Activated CD8-positive, alpha-beta T cell treated with anti-CD3 and anti-CD28 coated beads, Interleukin-2, amount 10 ng/mL, durations not matched to agents 7 days and 5 days (primary cell): ENCODE measurements at regions of chr17 and their contacts with region 1.

Region 1: GRCh38 chr17:68205251-68205807 is 42.5 kb upstream of the AMZ2 start:
- DNase-seq: peak; percentile 95
- ATAC-seq: peak; percentile 87
- H3K4me3 Mint-ChIP-seq: peak overlapping the region; percentile 85
- H3K27ac Mint-ChIP-seq: peak overlapping the region; percentile 89
- H3K4me1 Mint-ChIP-seq: peaks cover 42% of the 10 kb centered on the region
- H3K27me3 Mint-ChIP-seq: peaks cover 4% of the 10 kb centered on the region

Region 2: DNA sequence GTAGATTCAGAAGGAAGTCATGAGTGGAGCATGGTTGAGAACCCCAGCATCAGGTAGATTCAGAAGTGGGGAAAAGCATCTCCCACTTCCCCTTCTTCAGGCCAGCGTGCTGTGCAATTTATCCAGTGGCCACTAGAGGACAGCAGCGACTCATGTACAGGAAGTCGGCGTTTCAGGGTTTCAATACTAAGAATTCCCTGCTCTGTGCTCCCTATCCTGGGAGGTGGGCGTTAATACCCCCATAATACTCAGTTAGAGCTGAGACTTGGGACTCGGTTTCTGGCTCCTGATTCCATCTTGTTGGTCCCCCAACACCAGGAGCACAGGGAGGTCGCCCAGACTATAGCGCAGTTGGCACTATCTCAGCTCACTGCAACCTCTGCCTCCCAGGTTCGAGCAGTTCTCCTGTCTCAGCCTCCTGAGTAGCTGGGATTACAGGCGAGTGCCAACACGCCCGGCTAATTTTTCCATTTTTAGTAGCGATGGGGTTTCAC is 32.8 kb before region 1 on chr17:
- CTCF ChIA-PET with region 1: interaction called, 115 read pairs
- POLR2A ChIA-PET with region 1: interaction called, 9 read pairs
- DNase-seq: peak; percentile 83
- ATAC-seq: peak; percentile 52
- H3K4me3 Mint-ChIP-seq: no peak overlapping the region
- H3K27ac Mint-ChIP-seq: no peak overlapping the region
- H3K4me1 Mint-ChIP-seq: peaks cover 42% of the 10 kb centered on the region
- H3K27me3 Mint-ChIP-seq: no peaks in the 10 kb centered on the region

Region 3: GRCh38 chr17:68184816-68185436 is 20.4 kb before region 1 on chr17:
- CTCF ChIA-PET with region 1: interaction called, 82 read pairs
- POLR2A ChIA-PET with region 1: interaction called, 21 read pairs
- DNase-seq: peak; percentile 78
- ATAC-seq: peak; percentile 76
- H3K4me3 Mint-ChIP-seq: peak overlapping the region; percentile 54
- H3K27ac Mint-ChIP-seq: peak overlapping the region; percentile 81
- H3K4me1 Mint-ChIP-seq: peaks cover 56% of the 10 kb centered on the region
- H3K27me3 Mint-ChIP-seq: peaks cover 2% of the 10 kb centered on the region

Region 4: GRCh38 chr17:68247445-68248198 is 42.3 kb after region 1 on chr17 and contains the start of gene AMZ2:
- CTCF ChIA-PET with region 1: interaction called, 25 read pairs
- POLR2A ChIA-PET with region 1: interaction called, 49 read pairs
- DNase-seq: peak; percentile 96
- ATAC-seq: peak; percentile 89
- H3K4me3 Mint-ChIP-seq: peak within 1 kb of the TSS; percentile 81
- H3K27ac Mint-ChIP-seq: peak within 1 kb of the TSS; percentile 97
- H3K4me1 Mint-ChIP-seq: peaks cover 37% of the 10 kb centered on the region
- H3K27me3 Mint-ChIP-seq: no peaks in the 10 kb centered on the region
- total RNA-seq, gene AMZ2: 79.9 to 80.0 TPM